ENCODE measurements at regions of chr15 and their contacts with region 1.

Region 1: DNA sequence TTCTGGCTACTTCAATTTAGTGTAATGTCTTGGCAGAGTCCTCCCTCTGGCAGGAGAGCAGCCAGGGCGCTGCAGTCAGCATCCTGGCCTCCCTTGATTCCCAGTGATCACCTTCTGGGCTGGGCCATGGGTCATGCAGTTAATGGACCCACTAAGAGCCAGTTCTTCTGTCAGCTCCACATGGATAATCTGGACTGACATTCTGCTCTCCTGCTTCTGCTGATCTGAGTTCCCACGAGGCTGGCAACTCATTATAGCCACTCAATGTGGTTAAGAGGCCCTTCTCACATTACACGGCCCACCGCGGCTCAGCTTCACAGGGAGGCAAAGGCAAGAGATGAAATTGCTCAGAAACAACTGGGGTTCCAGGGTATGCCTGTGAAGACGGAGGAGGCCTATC is 94.0 kb downstream of the WDR76 start:
- DNase-seq: no peak

Region 2: GRCh38 chr15:43966646-43967045 is 45.8 kb after region 1 on chr15:
- intact Hi-C with region 1: no loop called
- DNase-seq: no peak

Region 3: DNA sequence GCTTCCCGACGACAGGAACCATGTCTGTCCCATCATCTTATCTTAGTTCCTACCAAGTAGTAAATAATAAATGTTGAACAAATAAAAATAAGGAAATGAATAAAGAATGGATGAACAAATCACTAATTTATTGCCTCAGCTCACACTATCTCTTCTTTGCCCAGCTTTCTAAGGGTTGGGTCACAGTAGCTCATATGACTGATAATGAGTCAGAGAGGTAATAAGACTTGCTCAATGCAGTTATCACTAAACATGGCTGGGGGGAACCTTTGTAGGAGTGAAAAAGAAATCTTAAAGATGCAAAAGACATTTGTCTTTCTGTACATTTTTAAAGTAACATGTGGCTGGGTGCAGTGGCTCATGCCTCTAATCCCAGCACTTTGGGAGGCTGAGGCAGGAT is 88.2 kb after region 1 on chr15:
- intact Hi-C with region 1: no loop called
- DNase-seq: no peak

Region 4: DNA sequence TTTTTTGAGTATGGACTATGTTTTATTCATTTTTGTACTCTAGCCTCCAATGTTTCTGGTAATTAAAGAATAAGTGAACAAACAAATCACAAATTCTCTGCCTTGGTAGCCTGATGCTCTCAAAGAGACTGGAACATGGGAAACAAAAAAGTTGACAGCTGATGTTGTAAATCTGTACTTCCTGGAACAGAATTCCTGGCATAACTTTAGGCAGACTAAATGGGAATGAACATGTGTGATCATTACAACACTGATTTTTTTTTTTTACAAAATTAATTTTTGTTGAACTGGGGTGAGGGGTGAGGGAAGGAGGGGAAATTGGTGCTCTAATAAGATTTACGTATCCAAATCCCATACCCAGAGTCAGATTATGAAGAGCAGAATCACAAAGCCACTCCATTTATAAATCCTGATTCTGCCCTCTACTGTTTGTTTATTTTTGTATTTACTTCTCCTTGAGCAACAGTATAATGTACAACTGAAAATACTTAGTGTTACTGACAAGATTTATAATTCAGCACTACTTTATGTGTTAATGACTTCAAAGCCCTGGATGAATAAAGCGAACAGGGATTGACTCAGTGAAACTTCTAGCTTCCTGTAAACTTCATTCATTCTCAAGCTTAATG is 109.2 kb after region 1 on chr15:
- intact Hi-C with region 1: loop called (anchors 10 kb)
- DNase-seq: no peak

Measured in posterior cingulate gyrus (tissue), 11 donors.